ENCODE measurements at regions of chr4 and their contacts with region 1.

Region 1: DNA sequence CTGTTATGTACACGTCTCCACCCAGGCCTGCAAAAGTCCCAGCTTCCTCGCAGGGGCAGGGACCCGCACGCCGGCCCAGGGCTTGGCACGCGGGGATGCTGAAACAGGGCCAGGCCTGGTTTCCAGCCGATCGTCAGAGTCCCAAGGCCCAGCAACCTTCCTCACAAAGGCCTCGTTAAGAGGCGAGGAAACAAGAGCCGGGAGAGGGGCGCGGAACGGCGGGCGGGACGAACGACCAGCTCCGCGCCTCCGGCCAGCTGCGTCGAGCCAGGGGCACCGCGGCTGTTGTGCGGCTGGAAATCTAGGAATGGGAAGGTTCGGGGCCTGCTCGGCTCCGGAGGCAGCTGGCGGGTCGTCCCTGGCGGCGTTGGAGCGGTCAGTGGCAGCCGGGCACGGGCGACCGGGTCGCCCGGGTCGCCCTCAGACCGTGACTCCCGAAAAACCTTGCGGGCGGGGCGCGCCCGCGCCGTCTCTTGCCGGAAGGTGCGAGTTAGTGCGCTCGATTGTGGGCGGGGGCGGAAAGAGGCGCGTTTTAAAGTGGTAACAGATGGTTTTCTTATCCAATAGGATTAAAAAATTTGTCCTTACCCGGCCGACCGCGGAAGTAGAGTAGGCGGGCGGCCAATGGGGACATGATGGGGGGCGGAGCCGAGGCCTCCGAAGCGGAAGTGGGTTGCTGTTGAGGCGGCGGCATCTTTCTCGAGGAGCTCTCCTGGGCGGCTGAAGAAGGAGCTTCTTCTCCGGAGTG is at the start of gene RNF4:
- DNase-seq: peak; percentile 88
- ATAC-seq: peak; percentile 87
- H3K4me3 ChIP-seq: peak within 1 kb of the TSS; percentile 99
- H3K27ac ChIP-seq: peak within 1 kb of the TSS; percentile 98
- H3K4me1 ChIP-seq: peaks cover 3% of the 10 kb centered on the region
- H3K27me3 ChIP-seq: no peaks in the 10 kb centered on the region
- CTCF ChIP-seq: no peak
- EP300 ChIP-seq: no peak
- POLR2A ChIP-seq: peak; percentile 87
- RAD21 ChIP-seq: no peak
- polyA plus RNA-seq, gene RNF4: 34.9 to 53.2 TPM

Region 2: GRCh38 chr4:2241410-2242353 is 226.9 kb before region 1 on chr4 and contains the starts of genes HAUS3 and POLN:
- CTCF ChIA-PET with region 1: interaction called, 3 read pairs
- POLR2A ChIA-PET with region 1: interaction called, 3 read pairs
- RAD21 ChIA-PET with region 1: interaction called, 9 read pairs
- SMC1A ChIA-PET with region 1: interaction called, 7 read pairs
- in situ Hi-C with region 1: no loop called
- intact Hi-C with region 1: loop called (anchors 5 kb)
- DNase-seq: peak; percentile 94
- ATAC-seq: peak; percentile 95
- H3K4me3 ChIP-seq: peak within 1 kb of the TSS; percentile 78
- H3K27ac ChIP-seq: peak within 1 kb of the TSS; percentile 70
- H3K4me1 ChIP-seq: peaks cover 6% of the 10 kb centered on the region; the same call in 1 of the 2 replicates
- H3K27me3 ChIP-seq: no peaks in the 10 kb centered on the region
- CTCF ChIP-seq: no peak
- EP300 ChIP-seq: no peak
- POLR2A ChIP-seq: peak; percentile 92
- RAD21 ChIP-seq: no peak
- polyA plus RNA-seq, gene HAUS3: 4.2 to 7.3 TPM
- polyA plus RNA-seq, gene POLN: 0.09 TPM in 1 of 2 experiments, not detected in the other

Region 3: DNA sequence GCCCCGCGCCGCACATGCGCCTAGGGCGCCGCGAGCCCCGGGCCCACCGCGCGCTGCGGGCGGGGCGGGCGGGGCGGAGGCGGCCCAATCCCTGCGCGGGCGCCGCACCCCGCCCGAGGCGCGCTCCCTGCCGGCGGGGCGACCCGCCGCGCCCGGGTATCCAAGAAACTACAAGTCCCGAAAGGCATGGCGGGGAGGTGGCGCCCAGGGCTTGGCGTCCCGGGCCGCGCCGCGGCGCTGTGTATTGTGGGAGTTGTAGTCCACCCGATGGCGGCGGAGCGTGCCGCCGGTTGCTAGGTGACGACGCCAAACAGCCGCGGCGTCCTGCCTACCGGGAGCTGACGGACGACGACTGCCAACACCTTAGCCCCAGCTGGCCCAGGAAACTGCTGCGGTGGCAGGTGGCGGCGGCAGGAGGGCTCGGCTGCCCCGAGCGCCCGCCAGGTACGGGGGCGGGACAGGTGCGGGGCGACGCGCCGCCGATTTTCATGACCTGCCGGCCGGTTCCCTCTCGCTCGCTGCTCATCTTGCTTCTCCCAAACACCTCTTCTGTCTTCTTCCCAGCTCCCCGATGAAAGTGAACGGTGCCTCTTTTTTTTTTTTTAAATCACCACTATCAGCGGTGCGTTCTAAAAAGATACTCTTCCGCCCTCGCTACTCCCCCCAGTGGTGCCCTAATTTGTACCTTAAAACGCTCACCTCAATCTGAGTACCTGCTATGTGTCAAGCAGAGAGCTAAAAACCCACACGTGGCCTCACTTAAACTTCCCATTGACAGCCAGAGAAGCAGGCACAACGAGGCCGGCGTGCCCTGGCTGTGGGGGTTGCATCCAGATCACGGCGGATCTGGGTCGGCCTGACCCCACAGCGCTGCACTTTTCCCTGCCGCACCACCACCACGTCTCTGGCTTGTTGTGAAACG is 49.7 kb before region 1 on chr4 and contains the start of gene CFAP99:
- CTCF ChIA-PET with region 1: no interaction called
- POLR2A ChIA-PET with region 1: no interaction called
- RAD21 ChIA-PET with region 1: interaction called, 12 read pairs
- SMC1A ChIA-PET with region 1: no interaction called
- in situ Hi-C with region 1: no loop called
- intact Hi-C with region 1: no loop called
- DNase-seq: peak; percentile 72
- ATAC-seq: peak; percentile 93
- H3K4me3 ChIP-seq: peak within 1 kb of the TSS; percentile 67
- H3K27ac ChIP-seq: no peak within 1 kb of the TSS
- H3K4me1 ChIP-seq: peaks cover 23% of the 10 kb centered on the region
- H3K27me3 ChIP-seq: peaks cover 12 to 22% of the 10 kb centered on the region in 2 experiments
- CTCF ChIP-seq: peak in 1 of 3 experiments; percentile 31; a peak in 2 of 6 replicates
- EP300 ChIP-seq: no peak
- POLR2A ChIP-seq: no peak
- RAD21 ChIP-seq: no peak
- polyA plus RNA-seq, gene CFAP99: not detected

Region 4: DNA sequence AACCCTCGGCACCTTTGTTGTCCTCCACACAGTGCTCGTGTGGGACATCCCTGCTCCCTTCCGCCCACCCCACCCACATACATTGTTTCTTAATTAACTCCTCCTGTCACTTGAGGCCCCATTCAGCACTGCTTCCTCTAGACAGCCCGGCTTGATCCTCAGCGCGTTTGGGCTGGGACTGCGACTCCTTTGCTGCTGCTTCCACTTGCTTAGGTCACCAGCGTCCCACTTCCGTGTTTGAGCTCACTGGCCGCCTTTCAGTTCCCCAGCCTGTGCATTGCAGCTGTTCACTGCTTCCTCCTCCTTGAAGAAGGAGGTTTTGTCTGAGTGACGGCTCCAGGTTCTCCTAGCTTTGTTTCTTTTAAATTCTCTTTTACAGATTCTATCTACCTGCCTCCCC is 16.4 kb after region 1 on chr4:
- CTCF ChIA-PET with region 1: interaction called, 11 read pairs
- POLR2A ChIA-PET with region 1: interaction called, 80 read pairs
- RAD21 ChIA-PET with region 1: interaction called, 47 read pairs
- SMC1A ChIA-PET with region 1: interaction called, 113 read pairs
- in situ Hi-C with region 1: no loop called
- intact Hi-C with region 1: no loop called
- DNase-seq: peak; percentile 62
- ATAC-seq: peak; percentile 78
- H3K4me3 ChIP-seq: peak overlapping the region; percentile 51; the same call in 1 of the 2 replicates
- H3K27ac ChIP-seq: peak overlapping the region; percentile 57
- H3K4me1 ChIP-seq: peaks cover 81% of the 10 kb centered on the region
- H3K27me3 ChIP-seq: no peaks in the 10 kb centered on the region
- CTCF ChIP-seq: no peak
- EP300 ChIP-seq: 0 out of 4 replicates have a peak, but pooled peaks of 1 of the 2 experiments have one; percentile 22
- POLR2A ChIP-seq: no peak
- RAD21 ChIP-seq: no peak

Region 5: GRCh38 chr4:2497931-2498330 is 29.3 kb after region 1 on chr4:
- CTCF ChIA-PET with region 1: interaction called, 4 read pairs
- POLR2A ChIA-PET with region 1: interaction called, 7 read pairs
- RAD21 ChIA-PET with region 1: interaction called, 4 read pairs
- SMC1A ChIA-PET with region 1: interaction called, 16 read pairs
- in situ Hi-C with region 1: no loop called
- intact Hi-C with region 1: no loop called
- DNase-seq: peak; percentile 90
- ATAC-seq: peak; percentile 98
- H3K4me3 ChIP-seq: no peak overlapping the region; the same call in 1 of the 2 replicates
- H3K27ac ChIP-seq: peak overlapping the region; percentile 56
- H3K4me1 ChIP-seq: peaks cover 30% of the 10 kb centered on the region
- H3K27me3 ChIP-seq: no peaks in the 10 kb centered on the region
- CTCF ChIP-seq: no peak
- EP300 ChIP-seq: no peak
- POLR2A ChIP-seq: no peak
- RAD21 ChIP-seq: no peak

Region 6: DNA sequence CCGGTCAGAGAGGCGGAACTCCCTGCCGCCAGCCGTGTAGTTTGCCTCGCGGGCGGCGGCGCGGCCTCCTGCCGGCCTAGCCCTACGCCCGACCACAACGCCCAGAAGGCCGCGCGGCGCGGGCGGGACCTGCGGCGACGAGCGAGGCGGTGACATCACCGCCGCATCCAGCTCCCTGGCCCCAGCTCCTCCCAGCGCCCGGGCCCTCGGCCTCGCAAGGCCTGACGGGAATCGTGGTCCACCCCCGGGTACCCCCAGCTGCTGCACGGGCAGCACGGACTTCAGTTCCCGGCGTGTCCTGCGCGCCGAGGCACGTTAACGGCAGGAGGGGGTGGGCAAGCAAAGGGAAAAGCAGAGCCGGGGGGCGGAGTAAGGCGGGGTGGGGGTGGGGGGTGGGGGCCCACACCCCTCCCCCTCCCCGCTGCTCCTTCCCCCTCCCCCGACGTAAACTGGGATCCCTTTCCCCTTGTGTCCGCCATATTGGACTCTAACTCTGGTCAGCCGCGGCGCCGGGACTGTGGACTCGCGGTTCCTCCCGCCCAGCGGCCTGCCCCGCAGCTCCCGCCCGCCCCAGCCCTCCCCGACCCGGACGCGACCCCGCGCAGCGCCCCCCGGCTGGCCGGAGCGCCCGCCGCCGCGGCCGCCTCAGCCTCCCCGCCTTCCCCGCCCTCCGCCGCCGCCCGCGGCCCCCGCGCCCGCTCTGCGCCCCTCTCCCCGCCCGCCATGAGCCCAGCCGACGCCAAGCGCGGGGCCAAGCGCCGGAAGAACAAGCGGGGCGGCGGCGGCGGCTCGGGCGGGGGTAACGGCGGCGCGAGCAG is 67.8 kb after region 1 on chr4 and contains the start of gene FAM193A:
- CTCF ChIA-PET with region 1: interaction called, 7 read pairs
- POLR2A ChIA-PET with region 1: interaction called, 19 read pairs
- RAD21 ChIA-PET with region 1: interaction called, 27 read pairs
- SMC1A ChIA-PET with region 1: interaction called, 6 read pairs
- in situ Hi-C with region 1: no loop called
- intact Hi-C with region 1: no loop called
- DNase-seq: peak; percentile 94
- ATAC-seq: peak; percentile 96
- H3K4me3 ChIP-seq: peak within 1 kb of the TSS; percentile 95
- H3K27ac ChIP-seq: peak within 1 kb of the TSS; percentile 83
- H3K4me1 ChIP-seq: peaks cover 8% of the 10 kb centered on the region
- H3K27me3 ChIP-seq: no peaks in the 10 kb centered on the region
- CTCF ChIP-seq: no peak
- EP300 ChIP-seq: 0 out of 4 replicates have a peak, but pooled peaks of 1 of the 2 experiments have one; percentile 49
- POLR2A ChIP-seq: peak; percentile 81
- RAD21 ChIP-seq: no peak
- polyA plus RNA-seq, gene FAM193A: 0.52 to 0.91 TPM

Measured in GM12878 (cell line).